K562 (cell line): ENCODE measurements at regions of chr4 and their contacts with region 1.

Region 1: DNA sequence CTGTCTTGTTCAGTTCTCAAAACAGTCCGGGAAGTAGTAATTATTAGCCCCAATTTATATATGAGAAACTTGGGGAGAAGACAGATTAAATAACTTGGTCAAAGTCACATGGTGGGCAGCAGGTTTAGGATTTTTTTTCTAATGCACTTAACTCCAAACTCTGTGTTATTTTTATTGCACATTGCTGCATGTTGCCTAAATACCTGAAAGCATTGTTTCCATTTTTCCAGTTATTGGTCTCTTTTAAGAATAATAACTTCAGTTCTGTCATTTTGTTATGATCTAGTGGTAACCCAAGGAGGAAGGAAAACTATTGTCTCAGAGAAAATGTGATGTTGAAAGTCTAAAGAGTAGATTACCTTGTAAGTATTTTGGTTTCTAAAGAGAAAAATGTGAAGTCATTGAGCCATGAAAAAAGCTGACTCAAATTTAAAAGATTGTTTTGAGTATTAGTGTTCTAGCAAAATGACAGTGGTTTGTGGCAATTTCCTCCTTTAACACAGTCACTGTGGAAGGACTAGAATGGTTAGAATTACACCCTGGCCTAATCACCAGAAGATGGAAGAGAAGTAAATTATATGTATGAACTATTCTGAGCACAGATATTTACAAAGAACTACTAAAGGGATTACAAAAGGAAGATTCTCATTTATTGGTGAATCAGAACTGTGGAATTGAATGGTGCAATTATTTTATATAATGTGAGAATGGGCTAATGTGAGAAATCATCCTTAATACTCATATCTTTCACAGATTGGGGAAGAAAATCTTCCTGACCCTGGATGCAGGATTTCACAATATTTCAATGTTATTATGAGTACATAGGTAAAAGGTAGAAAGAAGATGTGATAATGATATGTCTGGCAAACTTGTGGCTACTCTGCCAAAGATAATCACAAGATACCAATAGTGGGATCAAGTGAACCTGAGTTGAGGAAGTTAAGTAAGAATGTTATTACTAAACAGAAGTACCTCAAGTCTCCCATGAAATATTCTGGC is 21.7 kb upstream of the CXCL8 start:
- DNase-seq: no peak
- ATAC-seq: no peak
- H3K4me3 ChIP-seq: no peak overlapping the region
- H3K27ac ChIP-seq: no peak overlapping the region
- H3K4me1 ChIP-seq: no peaks in the 10 kb centered on the region; a peak in 2 of 5 replicates
- H3K27me3 ChIP-seq: no peaks in the 10 kb centered on the region
- CTCF ChIP-seq: no peak
- EP300 ChIP-seq: no peak
- POLR2A ChIP-seq: no peak
- RAD21 ChIP-seq: no peak

Region 2: DNA sequence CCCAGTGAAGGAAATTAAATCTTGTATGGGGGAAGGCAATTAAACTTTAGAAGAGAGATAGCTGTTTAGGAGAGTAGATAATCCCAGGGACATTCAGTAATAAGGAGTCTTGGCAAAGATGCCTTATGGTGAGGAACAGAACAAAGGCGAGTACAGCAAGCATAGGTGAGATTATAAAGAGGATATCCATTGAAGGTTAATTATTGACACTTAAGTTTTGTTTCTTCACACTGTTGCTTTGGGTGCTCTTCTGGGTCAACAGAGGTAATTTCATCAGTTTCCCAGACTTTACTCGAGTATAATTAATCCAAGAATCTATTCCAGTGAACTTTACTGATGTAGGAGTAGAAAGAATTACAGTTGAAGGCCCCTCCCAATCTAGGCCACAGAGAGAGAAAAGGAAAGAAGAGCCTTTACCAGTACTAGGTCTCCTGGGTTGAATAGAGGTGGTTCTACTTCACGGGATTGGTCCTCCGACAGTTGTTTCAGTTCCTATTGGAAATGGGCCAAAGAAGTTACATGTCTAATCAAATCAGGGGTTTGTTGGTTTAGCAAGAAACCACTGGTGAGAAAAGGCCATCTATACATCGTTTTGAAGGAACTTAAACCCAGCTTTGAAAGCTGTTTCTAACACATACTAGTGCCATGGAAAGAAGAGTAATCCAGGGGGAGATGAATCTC is 616.8 kb after region 1 on chr4:
- CTCF ChIA-PET with region 1: no interaction called
- POLR2A ChIA-PET with region 1: no interaction called
- in situ Hi-C with region 1: no loop called
- intact Hi-C with region 1: loop called (anchors 10 kb)
- DNase-seq: no peak
- ATAC-seq: no peak
- H3K4me3 ChIP-seq: no peak overlapping the region
- H3K27ac ChIP-seq: no peak overlapping the region
- H3K4me1 ChIP-seq: peaks cover 9 to 17% of the 10 kb centered on the region in 2 experiments
- H3K27me3 ChIP-seq: no peaks in the 10 kb centered on the region
- CTCF ChIP-seq: no peak
- EP300 ChIP-seq: no peak
- POLR2A ChIP-seq: no peak
- RAD21 ChIP-seq: no peak